ENCODE measurements at regions of chr14 and their contacts with region 1.

Region 1: DNA sequence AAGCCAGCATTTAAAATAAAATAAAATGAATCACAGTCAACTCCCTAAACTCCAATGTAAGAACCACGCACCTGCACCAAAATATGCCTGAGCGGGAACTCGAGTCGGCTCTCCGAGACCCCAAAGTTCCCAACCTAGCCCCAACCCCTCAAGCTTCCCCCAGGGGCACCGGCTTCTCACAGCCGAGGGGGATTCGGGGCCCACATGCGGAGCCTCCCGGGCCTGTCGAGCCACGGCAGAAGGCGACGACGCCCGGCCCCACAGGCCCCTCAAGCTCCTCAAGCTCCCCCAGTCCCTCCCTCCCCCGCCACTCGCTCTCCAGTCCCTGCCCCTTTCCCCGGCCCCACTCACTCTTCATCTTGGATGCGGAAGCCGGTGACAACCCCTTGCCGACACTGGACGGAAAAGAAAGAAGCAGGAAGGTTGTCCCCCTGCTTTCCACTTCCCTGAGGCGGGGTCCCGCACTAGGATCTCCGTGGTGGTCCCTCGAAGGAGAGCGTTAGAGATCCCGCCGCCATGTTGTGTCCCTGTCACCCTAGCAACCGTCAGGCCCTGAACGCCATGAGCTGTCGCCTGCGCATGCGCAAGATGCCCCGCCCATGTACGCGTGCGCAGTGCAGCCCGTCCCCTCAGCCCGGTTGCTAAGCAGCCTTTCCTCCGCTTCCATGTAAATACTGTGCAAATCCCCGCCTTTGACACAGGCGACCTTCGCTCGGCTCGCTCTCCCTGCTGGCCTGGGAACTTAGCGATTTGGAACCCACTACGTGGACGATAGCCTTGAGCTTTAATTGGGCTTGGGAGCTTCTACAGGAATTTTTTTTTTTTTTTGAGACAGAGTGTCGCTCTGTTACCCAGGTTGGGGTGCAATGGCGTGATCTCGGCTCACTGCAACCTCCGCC is at the start of gene MOK:
- DNase-seq: peak; percentile 96
- ATAC-seq: peak; percentile 96
- H3K4me3 ChIP-seq: peak within 1 kb of the TSS; percentile 64 to 81 (median 76)
- H3K27ac ChIP-seq: peak within 1 kb of the TSS; percentile 94
- H3K4me1 ChIP-seq: peaks cover 31% of the 10 kb centered on the region
- H3K27me3 ChIP-seq: no peaks in the 10 kb centered on the region
- CTCF ChIP-seq: no peak; the same call in 1 of the 2 replicates
- EP300 ChIP-seq: no peak; a peak in 1 of 4 replicates
- POLR2A ChIP-seq: 0 out of 4 replicates have a peak, but pooled peaks of 1 of the 2 experiments have one; percentile 31
- RAD21 ChIP-seq: no peak
- total RNA-seq, gene MOK: 11.8 and 15.3 TPM in 2 replicates

Region 2: DNA sequence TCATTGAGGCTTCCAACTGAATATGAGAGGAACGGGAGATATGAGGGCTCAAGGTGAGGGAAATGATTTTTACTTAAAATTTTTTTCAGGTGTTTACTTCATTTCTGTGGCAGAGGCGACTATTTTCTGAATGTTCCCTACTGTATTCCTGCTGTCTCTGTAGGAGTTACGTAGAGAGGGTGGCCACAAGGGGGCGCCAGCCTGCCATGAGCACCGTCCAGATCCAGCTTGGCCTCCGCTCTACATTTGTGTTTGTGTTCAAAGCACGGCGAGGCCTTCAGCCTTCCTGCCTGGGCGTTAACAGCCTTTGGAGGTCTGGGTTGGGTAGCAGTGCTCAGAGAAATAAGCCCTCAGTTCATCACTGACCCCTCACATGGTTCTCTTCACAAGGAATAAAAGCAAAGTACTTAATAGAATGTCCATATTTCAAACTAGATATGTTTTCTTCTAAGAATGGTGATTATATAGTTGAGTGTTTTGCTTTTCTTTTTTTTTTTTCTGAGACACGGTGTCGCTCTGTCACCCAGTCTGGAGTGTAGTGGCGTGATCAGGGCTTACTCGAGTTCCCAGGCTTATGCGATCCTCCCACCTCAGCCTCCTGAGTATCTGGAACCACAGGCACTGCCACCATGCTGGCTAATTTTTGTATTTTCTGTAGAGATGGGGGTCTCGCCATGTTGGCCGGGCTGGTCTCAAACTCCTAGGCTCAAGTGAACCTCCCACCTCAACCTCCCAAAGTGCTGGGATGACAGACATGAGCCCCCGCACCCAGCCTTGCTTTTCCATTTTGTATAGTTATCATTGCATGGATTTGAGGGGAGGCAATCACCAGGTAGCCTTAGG is 1195.5 kb after region 1 on chr14:
- CTCF ChIA-PET with region 1: no interaction called
- POLR2A ChIA-PET with region 1: no interaction called
- in situ Hi-C with region 1: no loop called
- intact Hi-C with region 1: loop called (anchors 5 kb)
- DNase-seq: peak; percentile 72
- ATAC-seq: peak; percentile 98
- H3K4me3 ChIP-seq: no peak overlapping the region
- H3K27ac ChIP-seq: no peak overlapping the region
- H3K4me1 ChIP-seq: peaks cover 8% of the 10 kb centered on the region
- H3K27me3 ChIP-seq: no peaks in the 10 kb centered on the region
- CTCF ChIP-seq: peak; percentile 93
- EP300 ChIP-seq: no peak
- POLR2A ChIP-seq: no peak
- RAD21 ChIP-seq: peak; percentile 79